Tibial artery (tissue), 4 donors: ENCODE measurements at regions of chr12 and their contacts with region 1.

Region 1: DNA sequence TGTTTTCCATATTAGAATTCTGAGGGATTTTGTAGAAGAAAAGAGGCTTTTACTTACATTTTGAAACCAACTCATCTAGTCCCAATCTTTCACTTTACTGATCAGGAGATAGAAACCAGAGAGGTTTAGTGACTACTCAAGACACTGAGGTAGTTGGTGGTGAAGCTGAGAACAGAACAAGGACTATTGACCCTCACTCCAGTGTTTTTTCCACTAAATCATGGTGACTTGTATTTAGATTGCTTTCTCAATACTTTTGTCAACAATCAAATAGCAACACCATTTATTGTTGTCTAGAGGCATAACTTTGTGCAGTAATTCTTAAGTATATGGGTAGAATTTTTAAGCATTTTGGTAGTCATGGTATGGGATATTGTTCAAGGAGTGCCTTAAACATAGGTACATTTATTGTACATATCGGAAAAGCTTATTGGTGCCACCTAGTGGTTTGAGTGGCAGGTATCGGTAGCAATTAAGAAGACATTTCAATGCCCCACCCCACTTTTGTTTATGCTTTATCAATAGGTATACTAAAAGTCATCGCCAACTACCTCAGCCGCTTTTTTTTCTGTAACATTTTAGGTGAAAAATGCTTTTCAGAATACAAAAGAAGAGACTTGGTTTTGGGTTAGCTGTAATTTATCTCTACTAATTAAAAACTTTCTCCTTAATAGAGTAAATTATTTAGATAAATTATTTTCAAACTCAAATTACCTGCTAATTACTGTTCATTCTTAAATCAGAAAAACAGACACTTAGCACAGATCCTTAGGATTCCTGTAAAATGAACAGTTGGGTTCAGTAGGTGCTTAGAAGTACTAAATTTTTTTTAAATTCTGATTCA is 47.3 kb upstream of the PAWR start:
- DNase-seq: no peak
- H3K4me3 ChIP-seq: no peak overlapping the region
- H3K27ac ChIP-seq: no peak overlapping the region
- H3K4me1 ChIP-seq: peaks cover 0 to 8% (median 2%) of the 10 kb centered on the region in 4 donors
- H3K27me3 ChIP-seq: no peaks in the 10 kb centered on the region
- CTCF ChIP-seq: peak; percentile 64 to 67

Region 2: GRCh38 chr12:79407671-79408622 is 330.1 kb before region 1 on chr12:
- intact Hi-C with region 1: loop called (anchors 2 kb)
- DNase-seq: peak; percentile 27 to 70
- H3K4me3 ChIP-seq: no peak overlapping the region
- H3K27ac ChIP-seq: peak overlapping the region; percentile 13 to 64
- H3K4me1 ChIP-seq: peaks cover 0 to 27% (median 16%) of the 10 kb centered on the region in 4 donors
- H3K27me3 ChIP-seq: no peaks in the 10 kb centered on the region
- CTCF ChIP-seq: peak; percentile 65 to 69

Region 3: GRCh38 chr12:79555028-79555930 is 182.8 kb before region 1 on chr12:
- intact Hi-C with region 1: loop called (anchors 5 kb)
- DNase-seq: no peak
- H3K4me3 ChIP-seq: no peak overlapping the region
- H3K27ac ChIP-seq: peak overlapping the region; percentile 50 to 77
- H3K4me1 ChIP-seq: peaks cover 5 to 87% (median 62%) of the 10 kb centered on the region in 4 donors
- H3K27me3 ChIP-seq: no peaks in the 10 kb centered on the region
- CTCF ChIP-seq: peak; percentile 60 to 68

Region 4: GRCh38 chr12:79681008-79681590 is 57.0 kb before region 1 on chr12:
- intact Hi-C with region 1: no loop called
- DNase-seq: no peak
- H3K4me3 ChIP-seq: no peak overlapping the region
- H3K27ac ChIP-seq: no peak overlapping the region
- H3K4me1 ChIP-seq: peaks cover 0 to 90% (median 28%) of the 10 kb centered on the region in 4 donors
- H3K27me3 ChIP-seq: no peaks in the 10 kb centered on the region
- CTCF ChIP-seq: no peak